Activated naive CD8-positive, alpha-beta T cell treated with anti-CD3 and anti-CD28 coated beads, Interleukin-2, amount 10 ng/mL, durations not matched to agents 7 days and 5 days (primary cell): ENCODE measurements at regions of chr18 and their contacts with region 1.

Region 1: DNA sequence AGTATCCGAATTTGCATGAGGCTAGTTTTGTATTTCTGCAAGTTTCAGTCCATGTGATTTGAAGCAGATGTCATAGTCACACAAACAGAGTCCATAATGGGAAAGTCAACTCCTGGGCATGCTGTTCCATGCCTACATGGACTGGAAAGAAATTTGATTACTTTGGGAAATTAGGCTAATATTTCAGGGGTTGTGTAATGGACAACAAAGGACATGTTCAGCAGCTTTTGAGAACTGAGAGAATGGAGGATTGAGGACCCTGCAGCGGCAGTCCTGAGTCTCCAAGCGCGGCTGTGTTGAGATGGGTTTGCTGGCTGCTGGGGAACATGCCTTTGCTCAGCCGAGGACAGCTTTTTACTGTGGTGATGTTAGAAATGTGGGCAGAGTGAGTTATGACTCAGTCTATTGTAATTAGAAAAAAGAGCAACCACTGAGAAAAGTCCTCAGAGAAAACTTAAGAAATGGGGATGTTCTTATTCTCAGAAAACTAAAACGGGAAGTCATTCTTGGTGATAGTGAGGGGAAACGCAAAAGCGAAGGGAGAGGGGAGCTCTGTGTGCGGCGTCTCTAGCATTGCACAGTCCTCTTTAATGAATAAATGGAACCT is 149.2 kb downstream of the FAM210A start:
- DNase-seq: no peak
- ATAC-seq: peak; percentile 89
- H3K4me3 Mint-ChIP-seq: peak overlapping the region; percentile 62
- H3K27ac Mint-ChIP-seq: peak overlapping the region; percentile 79
- H3K4me1 Mint-ChIP-seq: peaks cover 59% of the 10 kb centered on the region
- H3K27me3 Mint-ChIP-seq: no peaks in the 10 kb centered on the region

Region 2: GRCh38 chr18:13566941-13567746 is 10.1 kb before region 1 on chr18:
- POLR2A ChIA-PET with region 1: interaction called, 29 read pairs
- DNase-seq: peak; percentile 51
- ATAC-seq: peak; percentile 35
- H3K4me3 Mint-ChIP-seq: peak overlapping the region; percentile 80
- H3K27ac Mint-ChIP-seq: peak overlapping the region; percentile 95
- H3K4me1 Mint-ChIP-seq: peaks cover 72% of the 10 kb centered on the region
- H3K27me3 Mint-ChIP-seq: no peaks in the 10 kb centered on the region